ENCODE measurements at regions of chr20 and their contacts with region 1.

Region 1: GRCh38 chr20:21719592-21720214 is 14.2 kb downstream of the PAX1 start:
- DNase-seq: peak; percentile 70
- ATAC-seq: no peak
- H3K4me3 Mint-ChIP-seq: no peak overlapping the region
- H3K27ac Mint-ChIP-seq: no peak overlapping the region
- H3K4me1 Mint-ChIP-seq: no peaks in the 10 kb centered on the region
- H3K27me3 Mint-ChIP-seq: peaks cover 36% of the 10 kb centered on the region

Region 2: DNA sequence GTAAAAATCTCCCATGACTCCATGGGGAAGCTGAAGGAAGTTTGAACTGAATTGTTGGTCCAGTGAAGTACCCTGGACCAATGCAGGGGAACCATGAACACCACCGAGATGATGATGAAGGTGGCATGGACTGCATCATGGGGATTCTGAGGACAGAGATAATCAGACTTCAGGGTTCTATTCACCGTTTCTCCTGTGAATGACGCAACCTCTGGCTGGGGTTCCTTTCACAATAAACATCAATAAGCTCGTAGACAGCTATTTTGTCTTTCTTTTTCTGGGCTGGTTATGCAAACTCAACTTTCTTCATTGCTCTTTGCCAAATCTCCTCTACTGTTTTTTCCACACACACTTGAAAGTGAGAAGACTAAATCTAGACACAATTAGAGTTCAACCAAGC is 117.9 kb before region 1 on chr20:
- CTCF ChIA-PET with region 1: no interaction called
- POLR2A ChIA-PET with region 1: no interaction called
- intact Hi-C with region 1: no loop called
- DNase-seq: no peak
- ATAC-seq: no peak
- H3K4me3 Mint-ChIP-seq: no peak overlapping the region
- H3K27ac Mint-ChIP-seq: no peak overlapping the region
- H3K4me1 Mint-ChIP-seq: no peaks in the 10 kb centered on the region
- H3K27me3 Mint-ChIP-seq: peaks cover 19% of the 10 kb centered on the region

Region 3: GRCh38 chr20:21739682-21740081 is 20.0 kb after region 1 on chr20:
- CTCF ChIA-PET with region 1: interaction called, 11 read pairs
- POLR2A ChIA-PET with region 1: no interaction called
- intact Hi-C with region 1: no loop called
- DNase-seq: no peak
- ATAC-seq: no peak
- H3K4me3 Mint-ChIP-seq: no peak overlapping the region
- H3K27ac Mint-ChIP-seq: no peak overlapping the region
- H3K4me1 Mint-ChIP-seq: no peaks in the 10 kb centered on the region
- H3K27me3 Mint-ChIP-seq: no peaks in the 10 kb centered on the region

Region 4: GRCh38 chr20:22106308-22106938 is 386.7 kb after region 1 on chr20:
- CTCF ChIA-PET with region 1: no interaction called
- POLR2A ChIA-PET with region 1: no interaction called
- intact Hi-C with region 1: loop called in 1 of 2 experiments (anchors 5 kb)
- DNase-seq: no peak
- ATAC-seq: no peak
- H3K4me3 Mint-ChIP-seq: no peak overlapping the region
- H3K27ac Mint-ChIP-seq: no peak overlapping the region
- H3K4me1 Mint-ChIP-seq: no peaks in the 10 kb centered on the region
- H3K27me3 Mint-ChIP-seq: no peaks in the 10 kb centered on the region

Region 5: DNA sequence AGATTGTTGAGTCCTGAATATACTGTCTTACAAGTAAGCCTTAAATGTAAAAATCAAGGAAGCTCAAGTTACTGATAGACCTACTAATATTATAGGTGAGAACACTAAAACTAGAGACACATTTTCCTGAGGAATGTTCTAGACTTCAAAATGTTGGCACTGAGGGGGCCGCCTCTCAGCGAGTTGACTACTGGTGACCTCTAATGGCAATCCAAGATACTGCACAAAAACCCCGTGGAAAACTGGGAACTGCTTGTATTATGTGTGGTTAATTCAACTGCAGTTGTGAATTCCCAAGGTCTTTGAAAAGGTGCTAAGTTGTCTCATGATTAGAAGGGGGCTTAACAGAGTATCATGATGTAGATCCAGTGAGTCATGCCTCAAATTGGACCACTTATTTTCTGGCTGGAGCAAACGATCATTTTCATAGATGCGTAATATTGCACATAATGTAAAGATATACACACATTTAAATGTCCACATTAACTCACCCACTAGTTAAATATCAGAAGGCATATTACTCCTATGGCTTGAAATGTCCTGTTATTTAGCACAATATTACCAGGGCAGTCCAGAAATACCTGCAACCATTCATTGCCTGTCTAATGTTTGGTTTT is 528.5 kb after region 1 on chr20:
- CTCF ChIA-PET with region 1: no interaction called
- POLR2A ChIA-PET with region 1: no interaction called
- intact Hi-C with region 1: loop called in 1 of 2 experiments (anchors 2 kb)
- DNase-seq: peak; percentile 5
- ATAC-seq: no peak
- H3K4me3 Mint-ChIP-seq: no peak overlapping the region
- H3K27ac Mint-ChIP-seq: no peak overlapping the region
- H3K4me1 Mint-ChIP-seq: no peaks in the 10 kb centered on the region
- H3K27me3 Mint-ChIP-seq: peaks cover 3% of the 10 kb centered on the region